B cell (primary cell): ENCODE measurements at regions of chr15 and their contacts with region 1.

Region 1: GRCh38 chr15:90598031-90598577 is 68.4 kb downstream of the CRTC3 start:
- DNase-seq: peak; percentile 53
- ATAC-seq: no peak
- H3K4me3 ChIP-seq: peak overlapping the region in 1 of 5 experiments; percentile 39
- H3K4me3 Mint-ChIP-seq: peak overlapping the region; percentile 74
- H3K27ac ChIP-seq: peak overlapping the region; percentile 69 to 77
- H3K27ac Mint-ChIP-seq: peak overlapping the region; percentile 93
- H3K4me1 ChIP-seq: peaks cover 63 to 75% of the 10 kb centered on the region in 2 donors
- H3K4me1 Mint-ChIP-seq: peaks cover 77% of the 10 kb centered on the region
- H3K27me3 ChIP-seq: no peaks in the 10 kb centered on the region
- H3K27me3 Mint-ChIP-seq: no peaks in the 10 kb centered on the region
- CTCF ChIP-seq: no peak

Region 2: GRCh38 chr15:90387537-90388461 is 210.3 kb before region 1 on chr15 and contains the start of gene IQGAP1:
- CTCF ChIA-PET with region 1: interaction called, 4 read pairs
- POLR2A ChIA-PET with region 1: interaction called, 3 read pairs
- intact Hi-C with region 1: loop called (anchors 10 kb)
- DNase-seq: peak; percentile 97
- ATAC-seq: peak; percentile 86
- H3K4me3 ChIP-seq: peak within 1 kb of the TSS; percentile 72 to 93 (median 87)
- H3K4me3 Mint-ChIP-seq: peak within 1 kb of the TSS; percentile 92
- H3K27ac ChIP-seq: peak within 1 kb of the TSS; percentile 91 to 95
- H3K27ac Mint-ChIP-seq: peak within 1 kb of the TSS; percentile 99
- H3K4me1 ChIP-seq: peaks cover 22 to 26% of the 10 kb centered on the region in 2 donors
- H3K4me1 Mint-ChIP-seq: peaks cover 36% of the 10 kb centered on the region
- H3K27me3 ChIP-seq: no peaks in the 10 kb centered on the region
- H3K27me3 Mint-ChIP-seq: no peaks in the 10 kb centered on the region
- CTCF ChIP-seq: no peak
- total RNA-seq, gene IQGAP1: 216 and 233 TPM in 2 replicates

Region 3: GRCh38 chr15:90529371-90530249 is 68.5 kb before region 1 on chr15 and contains the start of gene CRTC3:
- CTCF ChIA-PET with region 1: interaction called, 4 read pairs
- POLR2A ChIA-PET with region 1: interaction called, 10 read pairs
- intact Hi-C with region 1: loop called (anchors 2 kb)
- DNase-seq: peak; percentile 83
- ATAC-seq: peak; percentile 85
- H3K4me3 ChIP-seq: peak within 1 kb of the TSS; percentile 41 to 90 (median 67)
- H3K4me3 Mint-ChIP-seq: peak within 1 kb of the TSS; percentile 98
- H3K27ac ChIP-seq: peak within 1 kb of the TSS; percentile 42 to 78
- H3K27ac Mint-ChIP-seq: peak within 1 kb of the TSS; percentile 91
- H3K4me1 ChIP-seq: peaks cover 30 to 42% of the 10 kb centered on the region in 2 donors
- H3K4me1 Mint-ChIP-seq: peaks cover 40% of the 10 kb centered on the region
- H3K27me3 ChIP-seq: no peaks in the 10 kb centered on the region
- H3K27me3 Mint-ChIP-seq: no peaks in the 10 kb centered on the region
- CTCF ChIP-seq: no peak
- total RNA-seq, gene CRTC3: 95.8 and 103 TPM in 2 replicates

Region 4: DNA sequence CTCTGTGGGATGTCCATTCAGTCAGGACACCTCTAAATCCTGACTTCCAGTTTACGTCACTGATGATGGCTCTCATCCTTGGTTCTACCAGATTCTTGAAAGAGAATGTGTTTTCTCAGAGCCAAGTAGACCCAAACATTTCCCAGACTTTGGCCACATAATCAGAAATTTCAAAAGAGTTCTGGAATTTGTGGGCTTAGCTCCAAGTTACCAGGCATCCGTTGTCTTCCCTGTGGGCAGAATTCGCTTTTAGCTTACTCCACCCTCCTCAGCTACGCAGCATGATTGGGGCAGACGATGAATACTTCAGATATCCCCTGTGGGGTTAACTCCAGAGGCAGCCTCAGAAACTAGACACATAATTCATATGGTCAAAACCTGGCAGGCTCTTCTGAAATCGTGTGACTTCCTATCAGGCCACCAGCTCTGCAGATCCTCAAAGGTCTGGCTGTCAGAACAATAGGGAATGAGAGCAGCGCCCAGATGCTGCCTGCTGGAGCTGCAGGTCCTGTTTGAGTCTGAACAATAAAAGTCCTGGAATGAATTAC is 37.8 kb before region 1 on chr15:
- CTCF ChIA-PET with region 1: interaction called, 6 read pairs
- POLR2A ChIA-PET with region 1: no interaction called
- intact Hi-C with region 1: loop called (anchors 1 kb)
- DNase-seq: no peak
- ATAC-seq: no peak
- H3K4me3 ChIP-seq: no peak overlapping the region
- H3K4me3 Mint-ChIP-seq: no peak overlapping the region
- H3K27ac ChIP-seq: no peak overlapping the region
- H3K27ac Mint-ChIP-seq: no peak overlapping the region
- H3K4me1 ChIP-seq: peaks cover 65 to 70% of the 10 kb centered on the region in 2 donors
- H3K4me1 Mint-ChIP-seq: peaks cover 74% of the 10 kb centered on the region
- H3K27me3 ChIP-seq: no peaks in the 10 kb centered on the region
- H3K27me3 Mint-ChIP-seq: no peaks in the 10 kb centered on the region
- CTCF ChIP-seq: no peak

Region 5: GRCh38 chr15:90585863-90586262 is 12.2 kb before region 1 on chr15:
- CTCF ChIA-PET with region 1: interaction called, 15 read pairs
- POLR2A ChIA-PET with region 1: interaction called, 4 read pairs
- intact Hi-C with region 1: no loop called
- DNase-seq: no peak
- ATAC-seq: no peak
- H3K4me3 ChIP-seq: no peak overlapping the region
- H3K4me3 Mint-ChIP-seq: no peak overlapping the region
- H3K27ac ChIP-seq: no peak overlapping the region
- H3K27ac Mint-ChIP-seq: no peak overlapping the region
- H3K4me1 ChIP-seq: peaks cover 49 to 64% of the 10 kb centered on the region in 2 donors
- H3K4me1 Mint-ChIP-seq: peaks cover 59% of the 10 kb centered on the region
- H3K27me3 ChIP-seq: no peaks in the 10 kb centered on the region
- H3K27me3 Mint-ChIP-seq: no peaks in the 10 kb centered on the region
- CTCF ChIP-seq: no peak

Region 6: DNA sequence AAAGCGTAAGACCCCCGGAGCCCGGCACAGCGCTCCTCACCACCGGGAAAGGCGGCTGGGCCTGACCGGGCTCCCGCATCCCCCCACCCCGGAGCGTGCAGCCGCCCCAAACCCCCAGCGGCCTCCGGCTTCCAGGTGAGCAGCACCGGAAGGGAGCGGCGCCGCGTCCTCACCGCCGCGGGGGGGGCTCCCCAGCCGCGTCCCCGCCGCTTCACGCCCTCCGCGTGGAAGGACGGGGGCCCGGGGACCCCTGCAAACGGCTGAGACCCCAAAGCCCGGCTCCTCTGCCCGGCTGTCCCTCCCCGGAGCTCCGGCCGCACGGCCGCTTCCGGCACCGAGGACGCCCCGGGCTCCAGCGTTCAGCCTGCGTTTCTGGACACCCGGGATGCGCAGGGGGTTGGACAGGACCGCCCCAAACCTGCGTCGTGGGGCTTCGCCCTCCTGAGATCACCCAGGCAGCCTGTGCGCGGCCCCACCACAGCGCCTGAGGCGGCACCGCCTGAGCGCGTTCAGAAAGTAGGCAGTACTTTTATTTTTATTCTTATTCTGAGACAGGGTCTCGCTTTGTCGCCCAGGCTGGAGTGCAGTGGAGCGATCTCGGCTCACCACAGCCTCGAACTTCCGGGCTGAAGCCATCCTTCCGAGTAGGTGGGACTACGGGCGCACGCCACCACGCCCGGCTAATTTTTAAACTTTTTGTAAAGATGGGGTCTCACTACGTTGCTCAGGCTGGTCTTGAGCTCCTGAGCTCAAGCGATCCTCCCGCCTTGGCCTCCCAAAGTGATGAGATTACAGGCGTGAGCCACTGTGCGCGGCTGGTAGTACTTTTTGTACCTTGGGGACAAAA is 67.4 kb after region 1 on chr15:
- CTCF ChIA-PET with region 1: no interaction called
- POLR2A ChIA-PET with region 1: no interaction called
- intact Hi-C with region 1: loop called (anchors 5 kb)
- DNase-seq: peak; percentile 83
- ATAC-seq: peak; percentile 73
- H3K4me3 ChIP-seq: peak overlapping the region in 4 of 5 experiments; percentile 50 to 82 (median 62)
- H3K4me3 Mint-ChIP-seq: peak overlapping the region; percentile 89
- H3K27ac ChIP-seq: peak overlapping the region; percentile 20 to 57
- H3K27ac Mint-ChIP-seq: peak overlapping the region; percentile 78
- H3K4me1 ChIP-seq: peaks cover 54 to 65% of the 10 kb centered on the region in 2 donors
- H3K4me1 Mint-ChIP-seq: peaks cover 56% of the 10 kb centered on the region
- H3K27me3 ChIP-seq: peaks cover 0 to 17% (median 11%) of the 10 kb centered on the region in 4 experiments
- H3K27me3 Mint-ChIP-seq: peaks cover 13% of the 10 kb centered on the region
- CTCF ChIP-seq: no peak

Region 7: DNA sequence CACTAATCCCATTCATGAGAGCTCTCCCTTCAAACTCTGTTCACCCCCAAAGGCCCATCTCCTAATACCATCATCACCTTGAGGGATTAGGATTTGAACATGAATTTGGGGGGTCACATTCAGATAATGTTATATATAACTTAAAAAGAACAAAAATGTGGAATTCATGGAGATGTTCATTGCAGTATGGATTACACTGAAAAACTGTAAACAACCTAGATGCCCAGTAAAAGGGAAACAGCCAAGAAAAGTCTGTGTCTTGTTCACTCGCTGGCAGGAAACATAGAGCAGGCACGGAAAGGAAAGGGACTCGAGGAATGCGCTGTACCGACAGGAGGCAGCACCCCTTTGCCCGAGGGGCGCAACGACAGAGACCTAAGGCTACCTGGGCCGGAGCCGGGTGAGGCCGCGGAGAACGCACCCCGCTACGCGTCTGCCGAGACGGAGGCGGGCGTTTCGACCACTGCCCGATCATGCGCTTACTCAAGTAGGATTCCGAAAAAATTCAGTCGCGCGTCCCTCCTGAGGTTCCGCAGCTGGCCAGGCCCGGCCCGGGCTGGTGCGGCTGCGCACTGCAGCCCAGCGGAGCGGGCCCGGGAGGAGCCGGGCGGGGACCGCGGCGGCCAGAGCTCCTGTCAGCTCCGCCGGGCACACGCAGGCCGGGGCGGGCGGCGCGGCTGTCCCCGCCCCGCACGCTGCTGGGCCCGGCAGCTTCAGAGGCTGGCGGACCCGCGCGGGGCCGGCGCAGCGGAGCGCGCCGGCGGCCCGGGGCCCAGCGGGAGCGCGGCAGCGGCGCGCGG is 304.1 kb after region 1 on chr15:
- CTCF ChIA-PET with region 1: no interaction called
- POLR2A ChIA-PET with region 1: no interaction called
- intact Hi-C with region 1: loop called (anchors 2 kb)
- DNase-seq: peak; percentile 89
- ATAC-seq: peak; percentile 75
- H3K4me3 ChIP-seq: peak overlapping the region; percentile 49 to 74 (median 69)
- H3K4me3 Mint-ChIP-seq: peak overlapping the region; percentile 85
- H3K27ac ChIP-seq: peak overlapping the region; percentile 52 to 66
- H3K27ac Mint-ChIP-seq: peak overlapping the region; percentile 97
- H3K4me1 ChIP-seq: peaks cover 20 to 28% of the 10 kb centered on the region in 2 donors
- H3K4me1 Mint-ChIP-seq: peaks cover 30% of the 10 kb centered on the region
- H3K27me3 ChIP-seq: no peaks in the 10 kb centered on the region
- H3K27me3 Mint-ChIP-seq: no peaks in the 10 kb centered on the region
- CTCF ChIP-seq: peak; percentile 80